IMR-90 (cell line): ENCODE measurements at regions of chrX and their contacts with region 1.

Region 1: DNA sequence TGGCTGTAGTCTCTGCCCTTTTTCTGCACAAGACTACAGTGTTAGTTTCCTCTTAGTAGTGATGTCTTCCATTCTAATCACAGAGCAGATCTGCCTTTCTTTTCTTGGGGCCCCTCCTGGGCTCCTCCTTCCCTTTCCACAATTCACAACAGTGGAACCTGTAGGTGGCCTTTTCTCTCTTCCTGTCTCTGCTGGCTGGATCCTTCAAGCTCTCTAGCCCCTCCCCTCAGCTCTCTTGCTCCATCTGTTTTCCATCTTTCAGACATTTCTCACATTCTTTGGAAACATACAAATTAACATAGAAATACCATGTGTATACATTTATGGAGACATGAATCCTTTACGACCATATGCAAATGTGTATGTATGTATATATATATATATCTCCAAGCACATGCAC is 304 bp upstream of the SPIN2A start:
- DNase-seq: no peak
- ATAC-seq: peak; percentile 73
- H3K4me3 ChIP-seq: peak overlapping the region; percentile 21
- H3K27ac ChIP-seq: no peak overlapping the region
- H3K4me1 ChIP-seq: no peaks in the 10 kb centered on the region
- H3K27me3 ChIP-seq: no peaks in the 10 kb centered on the region
- CTCF ChIP-seq: no peak
- POLR2A ChIP-seq: no peak
- RAD21 ChIP-seq: no peak

Region 2: DNA sequence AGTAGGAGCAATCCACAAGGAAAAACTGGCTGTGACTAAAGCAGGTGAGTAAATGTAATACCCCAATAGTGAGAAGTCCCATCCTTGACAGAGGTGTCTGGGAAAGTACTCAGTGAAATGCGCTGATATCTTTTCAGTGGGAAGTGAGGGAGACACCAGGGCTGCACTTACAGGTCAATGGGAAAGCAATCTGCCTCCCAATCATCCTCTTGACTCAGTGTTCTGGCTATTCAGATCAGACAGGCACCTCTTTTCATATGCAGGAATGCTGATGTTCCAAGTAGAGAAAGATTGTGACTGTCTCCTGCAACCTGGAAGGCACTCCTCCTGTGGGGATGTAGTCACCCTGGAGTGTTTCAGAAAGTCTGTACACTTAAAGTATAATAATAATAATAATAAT is 39.6 kb after region 1 on chrX:
- CTCF ChIA-PET with region 1: no interaction called
- POLR2A ChIA-PET with region 1: no interaction called
- dilution Hi-C with region 1: no loop called
- in situ Hi-C with region 1: loop called (anchors 5 kb)
- intact Hi-C with region 1: no loop called
- DNase-seq: no peak
- ATAC-seq: no peak
- H3K4me3 ChIP-seq: no peak overlapping the region
- H3K27ac ChIP-seq: no peak overlapping the region
- H3K4me1 ChIP-seq: no peaks in the 10 kb centered on the region
- H3K27me3 ChIP-seq: no peaks in the 10 kb centered on the region
- CTCF ChIP-seq: no peak
- POLR2A ChIP-seq: no peak
- RAD21 ChIP-seq: no peak

Region 3: GRCh38 chrX:57204306-57204705 is 66.8 kb after region 1 on chrX:
- CTCF ChIA-PET with region 1: no interaction called
- POLR2A ChIA-PET with region 1: no interaction called
- dilution Hi-C with region 1: no loop called
- in situ Hi-C with region 1: loop called (anchors 10 kb)
- intact Hi-C with region 1: no loop called
- DNase-seq: no peak
- ATAC-seq: no peak
- H3K4me3 ChIP-seq: no peak overlapping the region
- H3K27ac ChIP-seq: no peak overlapping the region
- H3K4me1 ChIP-seq: no peaks in the 10 kb centered on the region
- H3K27me3 ChIP-seq: no peaks in the 10 kb centered on the region
- CTCF ChIP-seq: no peak
- POLR2A ChIP-seq: no peak
- RAD21 ChIP-seq: no peak